ENCODE measurements at regions of chr1 and their contacts with region 1.

Region 1: DNA sequence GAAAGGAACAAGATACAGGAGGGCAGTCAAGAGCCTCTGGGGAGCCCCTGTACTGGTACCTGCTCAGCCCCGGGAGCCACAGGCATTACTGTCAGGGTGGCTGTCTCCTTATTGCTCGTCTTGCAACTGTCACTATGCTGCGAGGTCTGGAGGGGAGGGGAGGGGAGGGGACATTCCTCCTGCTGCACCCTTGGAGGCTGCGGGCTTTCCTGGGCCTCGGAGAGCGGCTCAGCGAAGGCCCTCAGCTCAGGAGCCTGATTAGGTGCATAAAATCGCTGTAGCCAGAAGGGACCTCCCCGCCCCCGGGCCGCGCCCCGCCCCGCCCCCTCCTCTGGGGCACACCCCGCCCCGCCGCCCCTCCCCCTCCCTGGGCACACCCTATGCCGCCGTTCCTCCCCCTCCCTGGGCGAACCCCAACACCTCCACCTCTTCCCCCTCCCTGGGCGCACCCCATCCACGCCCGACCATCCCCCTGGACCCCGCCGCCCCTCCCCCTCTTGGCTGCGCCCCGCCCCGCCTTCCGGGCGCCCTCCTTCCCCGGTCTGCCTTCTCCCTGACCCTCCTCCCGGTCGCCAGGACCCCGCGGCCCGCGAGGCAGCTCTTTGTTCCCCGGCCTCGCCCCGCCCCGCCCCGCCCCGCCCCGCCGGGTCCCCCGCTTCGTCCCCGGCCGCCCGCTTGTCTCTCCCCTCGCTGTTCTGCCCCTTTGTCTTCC is 35.5 kb downstream of the CACHD1 start:
- DNase-seq: no peak
- H3K4me3 Mint-ChIP-seq: peak overlapping the region; percentile 86
- H3K27ac Mint-ChIP-seq: no peak overlapping the region
- H3K4me1 Mint-ChIP-seq: peaks cover 17% of the 10 kb centered on the region
- H3K27me3 Mint-ChIP-seq: peaks cover 25% of the 10 kb centered on the region

Region 2: GRCh38 chr1:64543831-64544230 is 38.4 kb after region 1 on chr1:
- intact Hi-C with region 1: loop called (anchors 2 kb)
- DNase-seq: no peak
- H3K4me3 Mint-ChIP-seq: no peak overlapping the region
- H3K27ac Mint-ChIP-seq: no peak overlapping the region
- H3K4me1 Mint-ChIP-seq: peaks cover 38% of the 10 kb centered on the region
- H3K27me3 Mint-ChIP-seq: peaks cover 23% of the 10 kb centered on the region

Measured in activated T-helper 1 cell treated with anti-CD3 and anti-CD28 coated beads, Interleukin-12 subunit alpha, Interleukin-12 subunit beta, Interleukin-2, Interleukin-4 antibody, amounts not matched to agents 30 ng/mL and 10 ng/mL and 1 ng/mL, durations not matched to agents 14 hours and 24 hours and 36 hours (primary cell).